IMR-90 (cell line): ENCODE measurements at regions of chr5 and their contacts with region 1.

Region 1: GRCh38 chr5:113294311-113295110 is 140.3 kb downstream of the TSSK1B start:
- DNase-seq: peak; percentile 93
- ATAC-seq: peak; percentile 89
- H3K4me3 ChIP-seq: peak overlapping the region; percentile 91
- H3K27ac ChIP-seq: peak overlapping the region; percentile 87
- H3K4me1 ChIP-seq: peaks cover 8% of the 10 kb centered on the region; the same call in 1 of the 2 replicates
- H3K27me3 ChIP-seq: no peaks in the 10 kb centered on the region
- CTCF ChIP-seq: no peak; the same call in 1 of the 2 replicates
- POLR2A ChIP-seq: peak; percentile 93
- RAD21 ChIP-seq: peak; percentile 22

Region 2: GRCh38 chr5:113034182-113034773 is 260.2 kb before region 1 on chr5:
- CTCF ChIA-PET with region 1: no interaction called
- POLR2A ChIA-PET with region 1: no interaction called
- dilution Hi-C with region 1: no loop called
- in situ Hi-C with region 1: no loop called
- intact Hi-C with region 1: loop called (anchors 5 kb)
- DNase-seq: peak; percentile 95
- ATAC-seq: peak; percentile 63
- H3K4me3 ChIP-seq: no peak overlapping the region
- H3K27ac ChIP-seq: no peak overlapping the region
- H3K4me1 ChIP-seq: peaks cover 13% of the 10 kb centered on the region
- H3K27me3 ChIP-seq: no peaks in the 10 kb centered on the region
- CTCF ChIP-seq: no peak
- POLR2A ChIP-seq: no peak
- RAD21 ChIP-seq: peak; percentile 23; the same call in 1 of the 2 replicates

Region 3: DNA sequence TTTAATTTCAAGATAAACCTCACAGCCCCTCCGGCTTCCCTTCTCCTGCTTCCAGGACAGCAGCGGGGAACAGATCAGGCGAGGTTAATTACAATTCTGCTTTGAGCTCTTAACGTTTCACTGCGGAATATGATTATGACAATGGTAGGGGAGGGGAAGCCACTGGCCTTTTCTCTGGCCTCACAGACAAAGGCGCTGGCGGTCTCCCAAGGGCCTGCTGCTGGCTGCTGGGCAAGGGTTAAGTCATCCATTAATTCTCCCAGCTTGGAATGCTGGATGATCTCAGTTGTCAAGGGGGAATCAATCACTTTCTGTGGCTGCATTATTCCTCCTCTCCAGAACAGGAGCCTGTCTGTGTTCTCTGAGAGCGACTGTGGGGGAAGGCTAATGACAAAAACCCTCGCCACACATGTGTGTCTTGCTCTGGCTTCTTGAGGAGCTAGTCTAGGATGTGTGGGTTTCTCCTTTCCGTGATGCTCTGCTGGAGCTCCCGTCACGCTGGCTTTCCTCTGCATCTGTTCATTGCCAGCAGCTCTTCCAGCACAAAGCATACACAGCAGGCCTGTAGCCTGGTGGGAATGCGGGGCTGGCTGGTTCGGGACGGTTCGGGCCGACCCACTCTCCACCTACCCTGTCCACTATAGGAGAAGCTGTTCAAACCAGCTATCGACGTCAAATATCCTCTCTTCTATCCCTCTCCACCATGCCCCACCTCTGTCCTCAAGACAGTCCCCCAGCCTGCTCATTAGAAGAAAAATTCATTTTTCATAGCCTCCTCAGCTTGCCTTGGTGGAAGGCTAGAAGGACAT is 235.1 kb before region 1 on chr5:
- CTCF ChIA-PET with region 1: no interaction called
- POLR2A ChIA-PET with region 1: interaction called, 11 read pairs
- dilution Hi-C with region 1: no loop called
- in situ Hi-C with region 1: no loop called
- intact Hi-C with region 1: loop called (anchors 10 kb)
- DNase-seq: peak; percentile 74
- ATAC-seq: peak; percentile 64
- H3K4me3 ChIP-seq: no peak overlapping the region
- H3K27ac ChIP-seq: no peak overlapping the region
- H3K4me1 ChIP-seq: peaks cover 18% of the 10 kb centered on the region
- H3K27me3 ChIP-seq: no peaks in the 10 kb centered on the region
- CTCF ChIP-seq: no peak
- POLR2A ChIP-seq: no peak
- RAD21 ChIP-seq: no peak

Region 4: DNA sequence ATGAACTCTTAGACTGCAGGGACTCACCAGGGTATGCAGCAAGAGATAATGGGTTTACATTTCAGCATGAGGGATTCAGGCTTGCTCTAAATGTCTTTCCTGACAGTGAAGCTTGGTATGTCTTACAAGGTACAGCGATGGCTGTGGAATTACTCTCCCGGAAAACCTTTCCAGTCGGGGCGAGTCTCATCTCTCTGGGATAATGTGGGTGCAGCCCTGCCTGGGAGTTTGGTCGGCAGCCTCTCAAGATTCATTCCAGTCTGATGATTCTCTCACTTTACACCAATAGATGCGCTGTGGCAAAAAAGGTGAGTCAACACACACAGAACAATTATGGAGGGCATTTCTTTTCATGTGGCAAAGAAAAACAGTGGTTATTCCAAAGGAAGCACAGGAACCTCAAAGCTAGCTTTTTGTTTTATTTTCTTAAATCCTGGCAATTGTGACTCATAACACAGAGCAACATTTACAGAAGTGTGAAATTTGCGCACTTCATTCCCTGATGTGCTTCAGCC is 127.6 kb before region 1 on chr5:
- CTCF ChIA-PET with region 1: no interaction called
- POLR2A ChIA-PET with region 1: interaction called, 3 read pairs
- dilution Hi-C with region 1: no loop called
- in situ Hi-C with region 1: no loop called
- intact Hi-C with region 1: loop called (anchors 2 kb)
- DNase-seq: peak; percentile 89
- ATAC-seq: peak; percentile 47
- H3K4me3 ChIP-seq: no peak overlapping the region
- H3K27ac ChIP-seq: peak overlapping the region; percentile 85
- H3K4me1 ChIP-seq: peaks cover 26% of the 10 kb centered on the region
- H3K27me3 ChIP-seq: no peaks in the 10 kb centered on the region
- CTCF ChIP-seq: no peak
- POLR2A ChIP-seq: no peak
- RAD21 ChIP-seq: peak; percentile 12; the same call in 1 of the 2 replicates

Region 5: DNA sequence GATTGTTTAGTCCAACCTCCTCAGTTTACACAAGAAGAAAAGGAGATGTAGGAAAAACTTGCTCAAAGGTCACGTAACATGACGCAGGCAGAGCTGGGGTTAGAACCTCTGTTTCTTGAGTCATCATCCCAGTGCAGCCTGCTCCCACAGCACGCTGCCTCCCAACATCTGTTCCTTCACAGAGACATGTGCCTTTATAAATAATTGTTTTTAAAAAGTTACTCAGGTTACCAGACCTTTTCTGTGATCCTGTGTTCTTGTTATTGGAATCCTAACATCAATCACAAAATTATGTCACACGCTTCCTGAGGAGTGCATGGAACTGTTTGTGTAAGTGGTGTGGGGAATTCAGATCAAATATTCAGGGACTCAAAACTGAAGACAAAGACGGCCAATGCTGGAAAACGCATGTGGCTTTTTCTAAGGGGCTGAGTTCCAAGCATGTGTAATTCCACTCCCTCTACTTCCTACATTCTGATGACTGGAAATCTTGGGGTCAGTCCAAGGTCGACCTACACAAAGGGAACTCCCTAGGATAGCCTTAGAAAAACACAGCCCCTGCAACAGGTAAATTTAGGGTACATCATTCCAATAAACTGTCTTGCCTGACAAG is 44.1 kb before region 1 on chr5:
- CTCF ChIA-PET with region 1: no interaction called
- POLR2A ChIA-PET with region 1: no interaction called
- dilution Hi-C with region 1: no loop called
- in situ Hi-C with region 1: no loop called
- intact Hi-C with region 1: loop called (anchors 5 kb)
- DNase-seq: peak; percentile 100
- ATAC-seq: peak; percentile 90
- H3K4me3 ChIP-seq: no peak overlapping the region
- H3K27ac ChIP-seq: peak overlapping the region; percentile 35; the same call in 1 of the 2 replicates
- H3K4me1 ChIP-seq: peaks cover 24% of the 10 kb centered on the region
- H3K27me3 ChIP-seq: no peaks in the 10 kb centered on the region
- CTCF ChIP-seq: no peak
- POLR2A ChIP-seq: no peak; the same call in none of the 2 replicates
- RAD21 ChIP-seq: peak; percentile 28